Activated CD4-positive, alpha-beta T cell treated with anti-CD3 and anti-CD28 coated beads for 36 hours (primary cell): ENCODE measurements at regions of chr19 and their contacts with region 1.

Region 1: DNA sequence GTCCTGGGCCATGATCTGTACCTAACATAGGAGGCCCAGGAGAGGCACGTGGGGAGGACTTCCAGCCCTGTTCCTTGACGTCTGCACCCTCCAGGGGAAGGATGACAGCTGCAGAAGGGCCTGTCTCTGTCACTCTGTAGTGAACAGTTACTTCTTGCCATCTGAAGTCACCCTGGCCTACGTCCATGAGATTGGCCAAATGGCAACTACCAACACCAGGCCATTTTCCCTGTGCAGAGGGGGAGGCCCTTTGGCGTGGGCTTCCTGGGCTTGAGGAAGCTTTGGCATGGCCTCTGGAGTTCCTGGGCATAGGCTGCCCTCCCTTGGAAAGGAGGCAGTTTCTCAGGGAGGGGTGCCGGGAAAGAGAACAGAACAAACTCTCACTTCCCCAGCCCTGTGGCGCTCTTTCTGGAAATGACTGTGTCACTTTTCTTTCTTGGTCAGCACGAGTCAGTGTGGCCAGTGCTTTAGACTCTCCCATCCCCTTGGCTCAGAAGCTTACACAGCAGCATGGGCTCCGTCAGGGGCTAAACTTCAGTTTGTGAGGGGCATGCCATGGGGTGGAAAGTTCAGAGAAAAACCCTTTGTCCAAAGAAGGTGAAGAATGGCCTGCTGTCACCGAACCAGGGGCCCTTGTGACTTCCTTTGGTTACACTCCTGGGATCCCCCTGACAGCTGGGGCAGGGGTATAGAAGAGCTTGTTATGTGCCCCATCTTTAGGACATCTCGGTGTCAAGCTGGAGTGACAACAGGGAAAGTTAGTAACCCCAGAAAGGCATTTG is 5.3 kb downstream of the CARM1 start:
- DNase-seq: peak; percentile 25
- ATAC-seq: peak; percentile 14
- H3K4me3 Mint-ChIP-seq: no peak overlapping the region
- H3K27ac Mint-ChIP-seq: peak overlapping the region; percentile 47
- H3K4me1 Mint-ChIP-seq: peaks cover 42% of the 10 kb centered on the region
- H3K27me3 Mint-ChIP-seq: no peaks in the 10 kb centered on the region

Region 2: DNA sequence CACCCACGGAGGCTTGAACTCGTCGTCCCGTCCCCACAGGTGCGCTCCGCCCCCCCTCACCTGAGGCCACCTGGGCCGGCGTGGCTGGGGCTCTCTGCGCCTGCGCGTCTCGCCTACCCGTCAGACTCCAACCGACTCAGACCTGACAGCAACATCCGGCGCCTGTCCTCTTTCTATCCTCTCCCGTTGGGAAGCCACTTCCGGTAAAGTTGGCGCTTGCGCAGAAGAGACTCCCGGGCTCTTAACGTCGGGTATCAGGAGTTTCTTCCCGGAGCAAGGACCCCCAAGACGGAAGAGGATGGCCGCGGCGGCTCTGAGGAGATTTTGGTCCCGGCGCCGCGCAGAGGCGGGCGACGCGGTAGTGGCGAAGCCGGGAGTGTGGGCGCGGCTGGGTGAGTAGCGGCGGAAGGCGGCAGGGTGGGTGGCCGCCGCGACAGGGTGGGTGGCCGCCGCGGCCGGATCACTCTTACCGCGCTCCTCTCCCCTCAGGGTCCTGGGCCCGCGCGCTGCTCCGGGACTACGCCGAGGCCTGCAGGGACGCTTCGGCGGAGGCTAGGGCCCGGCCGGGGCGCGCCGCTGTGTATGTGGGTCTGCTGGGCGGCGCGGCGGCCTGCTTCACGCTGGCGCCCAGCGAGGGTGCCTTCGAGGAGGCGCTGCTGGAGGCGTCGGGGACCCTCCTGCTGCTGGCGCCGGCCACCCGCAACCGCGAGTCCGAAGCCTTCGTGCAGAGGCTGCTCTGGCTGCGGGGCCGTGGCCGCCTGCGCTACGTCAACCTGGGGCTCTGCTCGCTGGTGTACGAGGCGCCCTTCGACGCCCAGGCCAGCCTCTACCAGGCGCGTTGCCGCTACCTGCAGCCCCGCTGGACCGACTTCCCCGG is 52.1 kb after region 1 on chr19 and contains the starts of genes TIMM29 and YIPF2:
- CTCF ChIA-PET with region 1: interaction called, 3 read pairs
- POLR2A ChIA-PET with region 1: no interaction called
- intact Hi-C with region 1: loop called (anchors 1 to 5 kb)
- DNase-seq: peak; percentile 97
- ATAC-seq: peak; percentile 96
- H3K4me3 Mint-ChIP-seq: peak within 1 kb of the TSS; percentile 90
- H3K27ac Mint-ChIP-seq: peak within 1 kb of the TSS; percentile 79
- H3K4me1 Mint-ChIP-seq: peaks cover 21% of the 10 kb centered on the region
- H3K27me3 Mint-ChIP-seq: no peaks in the 10 kb centered on the region
- total RNA-seq, gene TIMM29: 8.6 to 15.5 TPM
- total RNA-seq, gene YIPF2: 15.8 to 21.3 TPM

Region 3: GRCh38 chr19:11293433-11294389 is 417.1 kb after region 1 on chr19:
- CTCF ChIA-PET with region 1: no interaction called
- POLR2A ChIA-PET with region 1: no interaction called
- intact Hi-C with region 1: no loop called
- DNase-seq: peak; percentile 89
- ATAC-seq: peak; percentile 99
- H3K4me3 Mint-ChIP-seq: peak overlapping the region; percentile 38
- H3K27ac Mint-ChIP-seq: no peak overlapping the region
- H3K4me1 Mint-ChIP-seq: peaks cover 2% of the 10 kb centered on the region
- H3K27me3 Mint-ChIP-seq: peaks cover 27% of the 10 kb centered on the region